Left ventricle myocardium superior (tissue), 1 donor: ENCODE measurements at regions of chr20 and their contacts with region 1.

Region 1: DNA sequence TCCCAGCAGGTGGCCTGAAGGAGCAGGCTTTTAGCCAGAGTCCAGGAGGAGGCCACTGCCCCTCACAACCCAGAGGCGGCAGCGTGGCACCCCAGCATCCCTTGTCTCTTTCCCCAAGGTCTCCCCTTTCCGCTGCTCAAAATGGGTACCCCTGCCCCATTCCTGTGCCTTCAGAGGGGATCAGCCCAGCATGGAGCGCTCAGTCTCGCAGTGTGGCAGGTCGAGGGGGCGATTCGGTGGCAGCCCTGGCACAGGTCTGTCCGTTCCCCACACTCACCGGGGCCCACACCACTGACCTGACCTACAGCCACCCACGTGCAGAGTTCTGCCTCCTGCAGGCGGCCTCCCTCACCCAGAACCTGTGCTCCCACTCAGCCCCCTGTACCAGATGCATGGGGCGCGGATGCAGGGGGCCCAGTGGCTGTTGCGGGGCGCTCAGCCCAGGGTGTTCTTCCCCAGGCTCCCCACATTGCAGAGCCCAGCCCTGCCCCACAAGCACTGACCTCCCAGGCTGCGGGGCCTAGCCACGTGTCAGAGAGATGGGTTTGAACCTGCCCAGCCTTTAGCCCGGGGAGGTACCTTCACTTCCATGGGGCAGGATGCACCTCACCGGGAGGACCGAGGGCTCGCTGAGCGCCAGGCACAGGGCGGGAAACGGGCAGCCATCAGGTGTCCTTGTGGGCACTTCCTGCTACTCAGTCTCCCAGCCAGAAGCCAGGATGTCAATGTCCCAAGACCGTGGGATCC is 41.8 kb downstream of the DSTN start:
- DNase-seq: no peak
- ATAC-seq: peak; percentile 2

Region 2: DNA sequence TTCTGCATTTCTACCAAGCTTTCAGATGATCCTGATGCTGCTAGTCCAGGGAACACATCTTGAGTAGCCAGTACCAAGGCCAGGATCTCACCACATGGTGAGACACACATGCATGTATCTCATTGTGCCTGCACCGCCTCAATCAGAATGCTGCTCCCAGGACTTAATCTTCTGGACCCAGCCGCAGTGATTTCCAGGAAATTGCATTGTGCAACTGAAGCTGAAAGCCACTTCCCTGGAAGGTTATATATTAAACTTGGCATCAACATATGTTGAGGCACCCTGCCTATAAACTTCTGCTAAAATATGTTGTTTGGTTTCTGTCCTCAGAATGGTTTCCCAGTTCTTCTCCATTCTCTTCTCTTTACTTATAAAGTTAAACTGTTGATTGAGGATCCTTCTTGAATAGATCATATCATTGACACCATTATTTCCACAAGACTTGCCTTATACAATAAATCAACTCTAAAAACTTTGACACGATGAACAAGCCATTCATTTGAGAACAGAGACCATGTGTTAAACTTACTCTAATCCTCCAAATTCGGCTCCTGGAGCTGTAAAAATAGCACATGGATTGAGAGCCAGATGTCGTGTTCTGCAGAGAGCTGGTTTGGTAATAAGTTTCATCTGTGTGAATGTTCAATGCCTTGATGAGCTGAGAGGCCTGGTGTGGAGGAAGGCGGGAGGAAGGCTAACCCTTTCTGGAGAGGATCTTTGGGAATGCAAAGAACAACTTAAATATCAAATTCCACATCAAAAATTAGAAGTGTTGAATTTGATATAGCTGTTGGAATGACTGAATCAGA is 449.8 kb before region 1 on chr20:
- intact Hi-C with region 1: no loop called
- DNase-seq: no peak
- ATAC-seq: no peak

Region 3: DNA sequence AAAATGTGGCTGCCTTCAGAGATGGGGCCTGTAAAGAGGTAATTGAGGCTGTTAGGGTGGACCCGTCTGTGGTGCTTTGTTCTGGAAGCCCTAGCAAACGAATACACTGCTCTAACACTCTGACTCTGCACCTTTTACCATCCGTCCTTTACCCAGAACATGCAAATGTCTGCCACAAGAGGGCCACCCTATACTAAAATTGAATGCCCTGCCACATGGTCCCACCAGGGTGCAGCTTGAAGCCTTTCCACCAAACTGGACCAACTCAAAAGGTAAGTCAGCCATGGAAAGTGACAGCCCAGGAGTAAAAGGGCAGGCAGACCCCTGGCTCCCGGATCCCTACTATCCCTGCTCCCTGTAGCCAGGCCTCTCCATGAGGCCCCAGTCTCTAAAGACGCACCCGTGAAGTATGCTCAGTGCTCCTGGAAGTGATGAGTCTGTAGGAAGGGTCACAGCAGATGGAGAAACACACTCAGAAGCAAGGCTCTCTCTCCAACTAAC is 74.7 kb before region 1 on chr20:
- intact Hi-C with region 1: loop called (anchors 5 kb)
- DNase-seq: peak; percentile 56
- ATAC-seq: peak; percentile 98

Region 4: DNA sequence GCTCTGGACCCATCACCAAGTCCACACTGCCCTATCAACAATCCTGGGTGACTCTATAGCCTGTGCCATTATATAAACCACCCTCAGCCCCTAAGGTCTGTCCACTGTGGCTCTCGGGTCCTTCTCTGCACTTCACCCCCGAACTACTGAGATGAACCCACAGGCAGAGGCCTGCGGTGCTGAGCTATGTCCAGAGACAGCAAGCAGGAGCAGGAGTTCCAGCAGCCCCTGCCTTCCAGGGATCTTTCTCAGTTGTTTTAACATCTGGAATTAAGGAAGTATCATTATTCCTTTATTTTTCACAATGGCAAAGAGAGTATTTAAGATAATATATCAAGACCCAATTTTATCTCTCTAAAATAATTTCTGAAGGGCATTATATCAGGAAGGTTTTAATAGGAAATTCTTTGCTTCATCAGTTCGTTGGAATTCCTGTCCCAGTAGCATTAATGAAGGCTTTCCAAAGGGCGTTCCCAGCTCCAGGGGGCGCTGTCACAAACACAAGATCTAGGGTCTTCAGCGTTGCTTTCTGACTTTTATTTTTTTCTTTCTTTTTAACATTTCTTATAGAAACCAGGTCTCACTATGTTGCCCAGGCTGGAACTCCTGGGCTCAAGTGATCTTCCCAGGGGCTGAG is 43.1 kb after region 1 on chr20:
- intact Hi-C with region 1: no loop called
- DNase-seq: peak; percentile 72
- ATAC-seq: peak; percentile 32

Region 5: GRCh38 chr20:17682103-17682888 is 70.6 kb after region 1 on chr20 and contains the start of gene RRBP1:
- intact Hi-C with region 1: no loop called
- DNase-seq: peak; percentile 99
- ATAC-seq: peak; percentile 97
- total RNA-seq, gene RRBP1: 35.6 TPM